ENCODE measurements at regions of chr7 and their contacts with region 1.

Region 1: GRCh38 chr7:90877201-90877600 is 281.1 kb downstream of the CDK14 start:
- DNase-seq: no peak
- ATAC-seq: no peak
- H3K4me3 ChIP-seq: no peak overlapping the region
- H3K27ac ChIP-seq: no peak overlapping the region
- H3K4me1 ChIP-seq: peaks cover 0 to 8% (median 0%) of the 10 kb centered on the region in 9 donors
- H3K27me3 ChIP-seq: no peaks in the 10 kb centered on the region
- CTCF ChIP-seq: no peak

Region 2: DNA sequence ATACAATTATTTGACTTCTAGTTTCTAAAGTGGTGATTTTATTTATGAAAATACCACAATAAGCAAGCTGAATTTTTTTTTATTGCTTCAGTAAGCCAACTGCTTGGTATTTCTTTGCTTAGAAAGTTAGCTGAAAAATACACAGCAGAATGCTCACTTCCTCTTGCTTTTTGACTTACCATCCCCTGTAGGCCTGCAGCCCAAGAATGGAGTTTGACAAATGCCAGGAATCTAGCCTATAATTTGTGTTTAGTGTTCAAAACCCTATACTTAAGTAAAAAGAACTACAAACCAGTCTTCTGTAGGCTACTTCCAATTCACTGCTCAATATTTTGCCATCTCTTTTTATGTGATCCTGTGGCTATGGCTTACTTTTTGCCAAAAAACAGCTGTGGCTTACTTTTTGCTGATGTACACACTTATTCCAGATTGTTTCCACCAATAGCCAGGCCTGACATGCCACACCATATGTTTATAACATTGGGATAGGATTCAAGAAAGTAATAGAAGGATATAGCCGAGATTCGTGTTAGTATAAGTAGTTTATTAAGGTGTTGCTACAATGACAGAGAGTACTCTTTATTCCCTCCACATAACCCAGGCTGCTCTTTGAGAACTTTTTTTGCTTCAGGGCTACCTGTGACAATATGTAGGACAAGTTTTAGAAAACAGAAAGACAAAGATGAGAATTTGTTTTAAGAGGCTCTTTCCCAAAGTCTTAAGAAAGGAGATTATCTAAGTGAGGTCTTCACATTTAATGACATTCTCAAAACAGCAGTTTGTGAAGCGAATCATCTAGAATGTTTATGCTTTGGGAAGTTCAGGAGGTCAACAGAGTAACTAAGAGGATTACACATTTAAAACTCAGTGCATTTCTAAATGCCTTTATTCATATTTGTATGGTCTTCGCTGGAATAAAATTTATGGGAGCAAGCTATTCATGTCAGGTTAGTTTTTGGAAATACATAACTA is 123.1 kb after region 1 on chr7:
- intact Hi-C with region 1: loop called in 1 of 10 experiments (anchors 10 kb)
- DNase-seq: no peak
- ATAC-seq: no peak
- H3K4me3 ChIP-seq: no peak overlapping the region
- H3K27ac ChIP-seq: no peak overlapping the region
- H3K4me1 ChIP-seq: peaks cover 0 to 17% (median 3%) of the 10 kb centered on the region in 9 donors
- H3K27me3 ChIP-seq: no peaks in the 10 kb centered on the region
- CTCF ChIP-seq: no peak